GM10248 (cell line): ENCODE measurements at regions of chr4 and their contacts with region 1.

Region 1: DNA sequence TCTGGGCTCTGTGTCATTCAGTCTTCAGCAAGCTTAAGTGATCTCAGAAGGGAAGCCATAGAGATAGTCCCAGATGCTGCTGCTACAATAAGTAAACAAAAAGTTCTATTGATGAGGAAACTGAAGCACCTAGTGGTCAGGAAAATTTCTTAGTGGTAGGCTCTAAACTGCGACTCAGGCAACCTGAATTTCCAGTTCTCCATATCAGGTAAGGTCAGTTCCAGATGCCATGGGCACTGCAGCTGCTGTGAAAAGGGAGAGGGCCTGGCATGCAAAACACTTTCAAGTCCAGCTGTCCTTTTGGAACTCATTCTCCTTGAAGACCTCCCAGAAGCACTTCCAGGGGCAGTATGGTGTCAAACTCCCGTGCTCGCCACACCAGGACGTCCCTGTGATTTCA is 46.2 kb downstream of the REELD1 start:
- DNase-seq: no peak
- CTCF ChIP-seq: no peak

Region 2: GRCh38 chr4:146243141-146243882 is 17.2 kb before region 1 on chr4:
- CTCF ChIA-PET with region 1: interaction called, 105 read pairs
- POLR2A ChIA-PET with region 1: no interaction called
- DNase-seq: peak; percentile 87
- CTCF ChIP-seq: peak; percentile 92

Region 3: DNA sequence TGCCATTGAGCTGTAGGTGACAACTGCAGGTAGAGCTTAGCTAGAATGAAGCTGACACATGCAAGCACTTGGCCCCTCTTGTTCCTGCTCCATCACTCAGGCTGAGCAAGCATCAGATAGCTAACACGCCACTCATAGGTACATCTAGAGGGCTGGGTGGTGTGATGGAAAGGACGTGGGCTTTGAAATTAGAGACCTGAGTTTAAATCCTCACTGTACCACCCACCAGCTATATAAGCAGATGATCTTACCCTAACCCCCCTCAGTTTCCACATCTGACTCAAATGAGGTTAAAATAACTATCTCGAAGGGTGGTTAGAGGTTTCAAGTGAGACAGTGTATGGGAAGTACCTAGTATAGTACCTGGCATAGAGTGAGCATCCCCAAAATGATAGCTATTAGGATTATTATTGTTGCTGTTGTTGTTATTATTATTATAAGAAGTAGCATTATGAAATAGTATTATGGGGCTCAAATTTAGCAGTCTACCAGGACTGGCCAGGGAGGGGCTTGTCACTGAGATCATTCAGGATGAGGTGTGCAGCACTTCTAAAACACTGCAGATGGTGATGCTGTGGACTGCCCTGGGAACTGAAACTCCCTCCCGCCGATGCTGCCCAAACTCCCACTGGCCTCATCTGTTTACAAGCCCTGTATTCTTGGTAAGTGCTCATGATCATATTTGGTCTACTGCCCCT is 12.8 kb after region 1 on chr4:
- CTCF ChIA-PET with region 1: interaction called, 14 read pairs
- POLR2A ChIA-PET with region 1: no interaction called
- DNase-seq: peak; percentile 38
- CTCF ChIP-seq: no peak

Region 4: DNA sequence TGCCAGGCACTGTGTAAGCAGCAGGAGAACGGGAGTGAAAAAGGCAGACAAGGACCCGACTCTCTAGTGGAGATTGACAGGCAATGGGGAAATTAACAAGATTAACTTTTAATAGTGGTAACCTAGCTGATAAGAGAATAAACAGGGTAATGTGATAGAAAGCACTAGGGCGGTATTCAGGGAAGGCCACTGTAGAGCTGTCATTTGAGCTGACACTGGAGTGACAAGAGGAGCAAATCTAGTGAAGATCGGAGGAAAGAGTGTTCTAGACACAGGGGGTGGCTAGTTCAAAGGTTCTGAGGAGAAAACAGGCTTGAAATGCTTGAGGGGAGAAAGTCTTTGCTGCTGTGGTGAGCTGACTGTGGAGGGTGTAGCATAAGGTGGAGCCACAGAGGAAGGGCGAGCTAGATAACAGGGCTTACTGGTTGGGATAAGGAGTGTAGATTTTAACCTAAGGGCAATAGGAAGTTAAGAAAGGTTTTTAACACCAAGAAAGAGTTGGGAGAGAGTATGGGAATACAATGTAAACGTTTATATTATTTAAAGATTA is 138.4 kb after region 1 on chr4:
- CTCF ChIA-PET with region 1: no interaction called
- POLR2A ChIA-PET with region 1: no interaction called
- DNase-seq: no peak
- CTCF ChIP-seq: no peak